Activated CD4-positive, alpha-beta memory T cell treated with anti-CD3 and anti-CD28 coated beads for 36 hours (primary cell): ENCODE measurements at regions of chr4 and their contacts with region 1.

Region 1: GRCh38 chr4:120718979-120719566 is 203.5 kb downstream of the PRDM5 start:
- DNase-seq: peak; percentile 26
- H3K4me3 Mint-ChIP-seq: no peak overlapping the region
- H3K27ac Mint-ChIP-seq: no peak overlapping the region
- H3K4me1 Mint-ChIP-seq: no peaks in the 10 kb centered on the region
- H3K27me3 Mint-ChIP-seq: peaks cover 5% of the 10 kb centered on the region

Region 2: GRCh38 chr4:120066517-120067340 is 652.3 kb before region 1 on chr4 and contains the start of gene MAD2L1:
- CTCF ChIA-PET with region 1: no interaction called
- POLR2A ChIA-PET with region 1: no interaction called
- intact Hi-C with region 1: loop called (anchors 5 kb)
- DNase-seq: peak; percentile 99
- H3K4me3 Mint-ChIP-seq: peak within 1 kb of the TSS; percentile 98
- H3K27ac Mint-ChIP-seq: peak within 1 kb of the TSS; percentile 99
- H3K4me1 Mint-ChIP-seq: peaks cover 58% of the 10 kb centered on the region
- H3K27me3 Mint-ChIP-seq: no peaks in the 10 kb centered on the region
- total RNA-seq, gene MAD2L1: 92.0 to 96.6 TPM

Region 3: DNA sequence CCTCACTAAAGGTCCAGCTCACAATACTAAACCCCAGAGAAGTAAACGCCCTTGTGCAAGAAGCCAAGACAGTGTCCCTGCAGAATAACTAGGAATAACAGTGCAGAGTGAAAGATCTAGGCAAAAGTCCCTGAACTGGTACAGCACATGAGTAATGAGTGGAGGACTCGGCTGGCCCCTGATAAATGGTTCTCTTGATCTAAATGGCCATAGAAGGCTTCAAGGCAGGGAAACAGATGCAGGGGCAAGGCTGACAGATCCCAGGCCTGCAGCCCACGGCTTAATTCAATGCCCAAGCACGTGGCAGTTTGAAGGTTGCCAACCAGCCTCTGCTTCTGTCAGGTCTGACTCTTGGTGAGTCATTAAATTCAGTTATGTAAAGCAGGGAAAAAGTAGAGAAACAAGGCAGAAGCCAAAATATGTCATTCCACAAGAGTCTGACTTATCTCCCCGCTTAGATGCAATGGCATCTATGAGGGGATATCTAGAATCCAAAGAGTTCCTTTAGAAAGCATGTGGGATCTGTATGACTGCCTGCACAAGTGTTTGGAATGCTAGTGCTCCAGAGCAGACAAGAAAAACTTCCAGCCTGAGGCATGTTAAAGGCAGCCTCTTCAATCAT is 82.2 kb after region 1 on chr4:
- CTCF ChIA-PET with region 1: no interaction called
- POLR2A ChIA-PET with region 1: no interaction called
- intact Hi-C with region 1: no loop called
- DNase-seq: no peak
- H3K4me3 Mint-ChIP-seq: no peak overlapping the region
- H3K27ac Mint-ChIP-seq: no peak overlapping the region
- H3K4me1 Mint-ChIP-seq: no peaks in the 10 kb centered on the region
- H3K27me3 Mint-ChIP-seq: peaks cover 2% of the 10 kb centered on the region

Region 4: DNA sequence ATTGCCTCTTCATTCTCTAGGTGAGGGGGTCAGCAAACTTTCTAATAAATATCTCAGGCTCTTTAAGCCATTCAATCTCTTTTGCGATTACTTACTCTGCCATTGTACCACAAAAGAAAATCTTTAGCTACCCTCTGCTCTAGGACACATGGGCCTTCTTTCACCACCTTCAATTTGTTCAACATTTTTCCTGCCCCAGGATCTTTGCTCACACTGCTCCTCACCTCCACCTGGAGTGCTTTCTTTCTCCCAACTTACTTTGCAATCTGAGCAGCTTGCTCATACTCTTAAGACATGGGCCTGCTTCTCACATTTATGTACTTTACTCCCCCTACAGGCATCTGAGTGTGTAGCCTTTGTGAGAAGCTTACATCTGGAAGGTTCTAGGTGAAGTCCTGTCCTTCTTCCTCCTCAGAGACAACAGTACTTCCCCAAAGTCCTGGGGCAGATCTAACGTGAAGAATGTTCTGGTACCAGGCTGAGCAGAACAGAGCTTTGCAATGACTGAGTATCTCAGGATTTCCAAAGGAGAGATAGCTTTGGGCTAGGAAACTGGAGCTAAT is 258.4 kb after region 1 on chr4:
- CTCF ChIA-PET with region 1: interaction called, 7 read pairs
- POLR2A ChIA-PET with region 1: no interaction called
- intact Hi-C with region 1: loop called (anchors 5 kb)
- DNase-seq: no peak
- H3K4me3 Mint-ChIP-seq: no peak overlapping the region
- H3K27ac Mint-ChIP-seq: no peak overlapping the region
- H3K4me1 Mint-ChIP-seq: no peaks in the 10 kb centered on the region
- H3K27me3 Mint-ChIP-seq: no peaks in the 10 kb centered on the region

Region 5: GRCh38 chr4:121096629-121097028 is 377.6 kb after region 1 on chr4:
- CTCF ChIA-PET with region 1: no interaction called
- POLR2A ChIA-PET with region 1: no interaction called
- intact Hi-C with region 1: loop called (anchors 1 kb)
- DNase-seq: no peak
- H3K4me3 Mint-ChIP-seq: no peak overlapping the region
- H3K27ac Mint-ChIP-seq: no peak overlapping the region
- H3K4me1 Mint-ChIP-seq: no peaks in the 10 kb centered on the region
- H3K27me3 Mint-ChIP-seq: no peaks in the 10 kb centered on the region

Region 6: DNA sequence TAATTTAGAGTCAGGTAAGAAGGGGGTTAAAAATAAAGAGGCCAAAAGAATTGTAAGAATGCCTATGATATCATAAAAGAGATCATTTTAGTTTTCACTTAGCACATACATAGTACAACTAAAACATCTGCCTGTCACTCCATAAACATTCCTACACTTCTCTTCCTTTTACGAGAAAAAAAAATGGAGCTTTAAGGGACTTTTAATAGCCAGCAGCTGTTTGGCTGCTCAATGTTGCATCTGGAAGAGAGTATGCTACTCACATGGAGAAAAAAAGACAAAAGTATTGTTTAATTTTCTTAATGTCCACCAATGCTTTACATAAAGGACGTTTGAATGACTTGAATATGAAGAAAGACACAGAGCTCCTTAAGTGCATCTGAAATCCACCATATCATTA is 493.7 kb after region 1 on chr4:
- CTCF ChIA-PET with region 1: no interaction called
- POLR2A ChIA-PET with region 1: no interaction called
- intact Hi-C with region 1: no loop called
- DNase-seq: no peak
- H3K4me3 Mint-ChIP-seq: no peak overlapping the region
- H3K27ac Mint-ChIP-seq: no peak overlapping the region
- H3K4me1 Mint-ChIP-seq: peaks cover 16% of the 10 kb centered on the region
- H3K27me3 Mint-ChIP-seq: no peaks in the 10 kb centered on the region